Caco-2 (cell line): ENCODE measurements at regions of chr20 and their contacts with region 1.

Region 1: DNA sequence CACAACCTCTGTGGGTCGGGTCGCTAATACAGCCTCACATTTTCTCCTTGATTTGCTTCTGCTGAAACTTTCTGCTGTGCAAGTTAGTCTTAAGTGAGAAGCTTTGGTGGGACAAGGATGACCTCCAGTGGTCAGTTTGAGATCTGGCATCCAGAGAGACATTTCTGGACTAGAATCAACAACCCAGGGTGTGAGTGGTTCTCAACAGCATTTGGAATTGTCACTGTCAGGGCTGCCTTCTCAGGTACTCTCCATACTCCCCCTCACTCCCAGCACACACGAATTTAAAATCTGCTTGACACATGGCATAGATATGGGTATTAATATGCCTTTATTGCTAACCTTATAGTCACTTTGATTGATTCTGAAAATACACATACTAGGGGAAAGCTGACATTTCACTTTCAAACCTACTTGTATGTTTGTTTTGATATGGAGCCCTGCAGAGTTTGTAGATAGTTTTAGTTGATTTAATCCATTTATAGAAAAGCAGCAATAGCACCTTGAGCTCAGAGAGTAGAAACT is 13.2 kb downstream of the OTOR start:
- DNase-seq: peak; percentile 71 to 72
- H3K4me3 ChIP-seq: no peak overlapping the region
- H3K4me3 Mint-ChIP-seq: peak overlapping the region; percentile 12
- H3K27ac Mint-ChIP-seq: no peak overlapping the region
- H3K4me1 ChIP-seq: peaks cover 10% of the 10 kb centered on the region
- H3K4me1 Mint-ChIP-seq: peaks cover 7% of the 10 kb centered on the region
- H3K27me3 ChIP-seq: no peaks in the 10 kb centered on the region
- H3K27me3 Mint-ChIP-seq: peaks cover 3% of the 10 kb centered on the region
- CTCF ChIP-seq: peak; percentile 81 to 84

Region 2: GRCh38 chr20:16517946-16518783 is 243.2 kb before region 1 on chr20:
- CTCF ChIA-PET with region 1: no interaction called
- POLR2A ChIA-PET with region 1: no interaction called
- intact Hi-C with region 1: loop called (anchors 1 kb)
- DNase-seq: peak; percentile 56 to 69
- H3K4me3 ChIP-seq: no peak overlapping the region
- H3K4me3 Mint-ChIP-seq: no peak overlapping the region
- H3K27ac Mint-ChIP-seq: no peak overlapping the region
- H3K4me1 ChIP-seq: no peaks in the 10 kb centered on the region
- H3K4me1 Mint-ChIP-seq: no peaks in the 10 kb centered on the region
- H3K27me3 ChIP-seq: no peaks in the 10 kb centered on the region
- H3K27me3 Mint-ChIP-seq: no peaks in the 10 kb centered on the region
- CTCF ChIP-seq: peak; percentile 63 to 66

Region 3: GRCh38 chr20:16701296-16701695 is 60.1 kb before region 1 on chr20:
- CTCF ChIA-PET with region 1: no interaction called
- POLR2A ChIA-PET with region 1: no interaction called
- intact Hi-C with region 1: loop called (anchors 1 kb)
- DNase-seq: peak; percentile 42 to 45
- H3K4me3 ChIP-seq: no peak overlapping the region
- H3K4me3 Mint-ChIP-seq: no peak overlapping the region
- H3K27ac Mint-ChIP-seq: no peak overlapping the region
- H3K4me1 ChIP-seq: no peaks in the 10 kb centered on the region
- H3K4me1 Mint-ChIP-seq: no peaks in the 10 kb centered on the region
- H3K27me3 ChIP-seq: no peaks in the 10 kb centered on the region
- H3K27me3 Mint-ChIP-seq: peaks cover 18% of the 10 kb centered on the region
- CTCF ChIP-seq: peak; percentile 35 to 60

Region 4: GRCh38 chr20:16810216-16810615 is 48.8 kb after region 1 on chr20:
- CTCF ChIA-PET with region 1: no interaction called
- POLR2A ChIA-PET with region 1: no interaction called
- intact Hi-C with region 1: loop called (anchors 5 kb)
- DNase-seq: no peak
- H3K4me3 ChIP-seq: no peak overlapping the region
- H3K4me3 Mint-ChIP-seq: no peak overlapping the region
- H3K27ac Mint-ChIP-seq: no peak overlapping the region
- H3K4me1 ChIP-seq: no peaks in the 10 kb centered on the region
- H3K4me1 Mint-ChIP-seq: no peaks in the 10 kb centered on the region
- H3K27me3 ChIP-seq: peaks cover 2% of the 10 kb centered on the region; the same call in 1 of the 2 replicates
- H3K27me3 Mint-ChIP-seq: peaks cover 27% of the 10 kb centered on the region
- CTCF ChIP-seq: no peak